Aorta (tissue), 5 donors: ENCODE measurements at regions of chr16 and their contacts with region 1.

Region 1: GRCh38 chr16:65117811-65118448 is 3.9 kb downstream of the CDH11 start:
- DNase-seq: peak; percentile 66 to 79
- ATAC-seq: peak; percentile 63
- H3K4me3 ChIP-seq: no peak overlapping the region
- H3K27ac ChIP-seq: no peak overlapping the region
- H3K4me1 ChIP-seq: peaks cover 5 to 9% of the 10 kb centered on the region in 2 donors
- H3K27me3 ChIP-seq: no peaks in the 10 kb centered on the region

Region 2: DNA sequence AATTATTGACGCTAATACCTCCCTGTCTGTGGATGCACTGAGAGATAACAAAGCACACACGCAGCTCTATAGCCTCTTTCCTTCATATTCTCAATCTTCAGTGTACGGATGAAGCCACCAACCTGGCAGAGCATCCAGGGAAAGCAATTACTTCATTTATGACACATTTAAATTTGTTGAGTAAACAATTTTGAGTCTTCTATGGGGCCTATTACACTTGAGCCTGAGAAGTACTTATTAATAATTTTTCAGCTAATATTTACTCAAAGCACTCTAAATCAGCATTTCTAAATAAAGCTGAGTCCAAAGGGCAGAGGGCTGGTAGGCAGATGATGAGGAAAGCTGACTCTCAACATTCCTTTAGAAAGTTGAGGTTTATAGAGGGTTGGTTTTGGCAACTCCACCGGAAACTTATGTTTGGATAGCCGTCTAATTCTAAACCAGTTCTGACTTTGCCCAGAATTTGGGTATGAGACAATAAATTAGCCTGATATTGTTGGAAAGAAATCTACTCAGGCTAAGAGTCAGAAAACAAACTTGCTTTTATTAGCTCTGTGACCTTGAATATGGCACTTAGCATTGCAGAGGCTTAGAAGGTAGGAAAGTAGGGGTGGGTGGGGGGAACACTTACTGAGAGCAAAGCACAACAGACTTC is 639.6 kb before region 1 on chr16:
- intact Hi-C with region 1: loop called in 1 of 2 experiments (anchors 5 kb)
- DNase-seq: no peak
- ATAC-seq: peak; percentile 82
- H3K4me3 ChIP-seq: no peak overlapping the region
- H3K27ac ChIP-seq: no peak overlapping the region
- H3K4me1 ChIP-seq: peaks cover 6 to 10% of the 10 kb centered on the region in 2 donors
- H3K27me3 ChIP-seq: no peaks in the 10 kb centered on the region

Region 3: DNA sequence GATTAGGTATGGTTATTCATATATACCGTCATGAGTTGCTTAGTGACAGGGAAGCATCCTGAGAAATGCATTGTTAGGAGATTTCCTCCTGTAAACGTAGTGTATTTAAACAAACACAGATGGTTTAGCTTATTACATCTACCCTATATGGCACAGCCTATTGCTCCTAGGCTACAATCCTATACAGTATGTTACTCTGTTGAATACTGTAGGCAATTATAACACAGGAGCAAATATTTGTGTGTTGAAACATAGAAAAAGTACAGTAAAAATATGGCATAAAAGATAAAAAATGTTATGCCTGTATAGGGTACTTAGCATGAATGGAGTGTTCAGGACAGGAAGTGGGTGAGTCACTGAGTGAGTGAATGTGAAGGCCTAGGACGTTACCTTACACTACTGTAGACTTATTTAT is 153.8 kb before region 1 on chr16:
- intact Hi-C with region 1: no loop called
- DNase-seq: no peak
- ATAC-seq: no peak
- H3K4me3 ChIP-seq: no peak overlapping the region
- H3K27ac ChIP-seq: no peak overlapping the region
- H3K4me1 ChIP-seq: no peaks in the 10 kb centered on the region
- H3K27me3 ChIP-seq: no peaks in the 10 kb centered on the region

Region 4: DNA sequence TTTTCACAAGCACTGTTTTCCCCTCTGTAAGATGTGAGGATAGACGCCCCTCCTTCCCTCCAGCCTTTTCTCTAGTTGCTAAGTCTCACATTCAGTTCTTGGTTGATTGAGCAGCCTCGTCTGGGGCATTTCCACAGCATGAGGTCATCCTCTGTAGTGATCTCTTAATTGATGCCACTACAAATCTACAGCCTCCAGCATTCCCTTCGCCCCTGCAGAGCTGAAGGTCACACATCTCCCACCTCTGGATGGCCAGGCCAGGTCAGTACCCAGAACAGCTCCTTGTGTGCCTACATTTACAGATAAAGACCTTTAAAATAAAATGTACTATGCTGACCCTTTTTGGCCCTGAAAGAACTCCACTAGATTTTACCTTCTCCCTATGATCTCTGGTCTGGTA is 36.4 kb after region 1 on chr16:
- intact Hi-C with region 1: no loop called
- DNase-seq: no peak
- ATAC-seq: no peak
- H3K4me3 ChIP-seq: no peak overlapping the region
- H3K27ac ChIP-seq: no peak overlapping the region
- H3K4me1 ChIP-seq: no peaks in the 10 kb centered on the region
- H3K27me3 ChIP-seq: no peaks in the 10 kb centered on the region

Region 5: DNA sequence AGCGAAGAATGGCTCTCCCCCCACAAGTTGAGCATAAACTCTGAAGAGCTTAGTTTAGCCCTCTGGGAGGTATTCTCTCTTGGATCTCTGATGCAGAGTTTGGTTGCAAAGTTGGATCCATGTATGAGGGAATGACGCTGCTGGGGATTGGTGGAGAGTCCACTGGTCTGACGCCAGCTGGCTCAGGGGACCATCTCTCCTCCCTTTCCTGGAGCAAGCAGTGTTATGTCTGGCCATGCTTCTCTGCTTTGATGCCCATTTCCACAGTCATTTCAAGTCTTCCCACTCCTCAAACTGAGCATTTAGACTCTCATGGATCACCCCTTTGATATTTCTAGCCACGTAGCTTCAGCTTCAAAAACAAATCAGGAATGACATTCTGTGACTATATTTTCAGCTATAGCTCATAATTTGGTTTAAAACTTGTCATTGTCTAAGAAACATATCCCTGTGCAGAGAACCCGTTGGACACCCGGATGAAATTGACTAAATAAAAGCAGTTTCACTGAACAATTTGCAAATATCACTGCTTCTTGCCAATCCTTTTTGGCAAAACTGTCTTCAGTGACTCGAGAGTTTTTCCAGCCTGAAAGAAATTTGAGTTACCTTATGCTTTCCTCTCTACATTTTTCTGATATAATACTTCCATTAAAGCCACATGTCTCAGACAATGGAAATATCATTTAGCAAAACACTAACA is 197.3 kb after region 1 on chr16:
- intact Hi-C with region 1: loop called (anchors 5 kb)
- DNase-seq: peak; percentile 90
- ATAC-seq: peak; percentile 88
- H3K4me3 ChIP-seq: no peak overlapping the region
- H3K27ac ChIP-seq: peak overlapping the region; percentile 35 to 48
- H3K4me1 ChIP-seq: peaks cover 12 to 21% of the 10 kb centered on the region in 2 donors
- H3K27me3 ChIP-seq: no peaks in the 10 kb centered on the region

Region 6: GRCh38 chr16:65524997-65525396 is 407.1 kb after region 1 on chr16:
- intact Hi-C with region 1: loop called in 1 of 2 experiments (anchors 10 kb)
- DNase-seq: peak in 1 of 2 donors; percentile 64
- ATAC-seq: no peak
- H3K4me3 ChIP-seq: no peak overlapping the region
- H3K27ac ChIP-seq: peak overlapping the region in 1 of 2 donors; percentile 12
- H3K4me1 ChIP-seq: peaks cover 2 to 6% of the 10 kb centered on the region in 2 donors
- H3K27me3 ChIP-seq: no peaks in the 10 kb centered on the region